Left lung (tissue), 14 donors: ENCODE measurements at regions of chr6 and their contacts with region 1.

Region 1: DNA sequence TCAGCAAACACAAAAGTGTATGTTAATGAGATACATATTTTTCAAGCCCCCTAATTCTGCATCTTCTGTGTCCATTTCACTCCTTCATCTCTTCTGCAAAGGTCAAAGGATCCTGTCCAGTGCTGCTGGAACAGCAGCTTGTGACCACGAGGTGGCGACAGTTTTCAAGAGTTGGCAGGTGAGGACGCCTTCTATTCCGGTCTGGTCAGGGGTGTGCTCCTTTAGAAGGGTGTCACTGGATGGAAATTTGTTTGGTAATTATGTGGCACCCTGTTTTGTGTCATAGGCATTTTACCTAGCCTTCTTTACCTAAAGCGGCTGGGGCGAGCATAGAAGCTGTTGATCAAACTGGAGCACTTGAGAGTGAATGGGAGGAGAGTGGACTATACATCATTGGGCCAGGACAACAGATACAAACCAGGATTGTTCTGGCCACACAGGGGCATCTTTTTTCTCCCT is 32.9 kb upstream of the ERVFRD-1 start:
- DNase-seq: peak; percentile 65 to 85 (median 80)
- ATAC-seq: peak; percentile 96
- H3K4me3 ChIP-seq: no peak overlapping the region
- H3K27ac ChIP-seq: no peak overlapping the region
- H3K4me1 ChIP-seq: peaks cover 8 to 21% of the 10 kb centered on the region in 2 donors
- H3K27me3 ChIP-seq: no peaks in the 10 kb centered on the region
- CTCF ChIP-seq: peak; percentile 85 to 92

Region 2: DNA sequence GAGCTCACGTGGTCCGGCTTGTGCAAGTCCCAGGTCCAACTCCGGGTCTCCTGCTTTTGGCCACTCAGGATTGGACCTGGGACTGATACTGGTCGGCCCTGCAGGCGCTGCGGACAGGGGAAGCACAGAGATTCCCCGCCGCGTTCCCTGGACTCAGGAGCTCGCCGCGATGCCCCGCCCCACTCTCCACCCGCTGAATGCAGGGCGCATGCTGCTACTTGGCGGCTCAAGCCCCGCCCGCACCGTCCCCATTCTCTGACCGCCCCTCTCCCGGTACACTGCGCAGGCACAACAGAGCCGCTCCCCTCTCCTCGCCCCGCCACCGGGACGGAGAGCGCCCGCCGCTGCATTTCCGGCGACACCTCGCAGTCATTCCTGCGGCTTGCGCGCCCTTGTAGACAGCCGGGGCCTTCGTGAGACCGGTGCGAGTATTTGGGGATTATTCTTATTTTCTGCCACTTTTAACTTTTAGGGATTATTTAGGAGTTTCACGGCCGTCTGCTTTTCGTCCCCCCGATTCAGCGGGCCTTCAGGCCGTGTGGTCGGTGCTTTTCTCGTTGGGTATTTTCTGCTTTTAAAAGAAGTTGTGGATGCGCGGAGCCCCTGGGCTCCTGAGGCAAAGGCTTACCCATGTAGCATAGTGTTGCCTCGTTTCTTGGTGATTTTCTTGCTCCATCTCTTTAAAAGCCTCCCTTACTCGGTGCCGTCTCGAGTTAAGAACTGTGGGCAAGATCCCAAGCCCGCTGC is 421.4 kb before region 1 on chr6 and contains the start of gene TMEM14C:
- intact Hi-C with region 1: no loop called
- DNase-seq: peak; percentile 96 to 100 (median 99)
- ATAC-seq: peak; percentile 98
- H3K4me3 ChIP-seq: peak within 1 kb of the TSS; percentile 57 to 65
- H3K27ac ChIP-seq: peak within 1 kb of the TSS; percentile 86 to 87
- H3K4me1 ChIP-seq: peaks cover 10 to 42% of the 10 kb centered on the region in 2 donors
- H3K27me3 ChIP-seq: no peaks in the 10 kb centered on the region
- CTCF ChIP-seq: no peak
- polyA plus RNA-seq, gene TMEM14C: 138 to 154 (median 149) TPM

Region 3: GRCh38 chr6:11496152-11497060 is 352.0 kb after region 1 on chr6:
- intact Hi-C with region 1: loop called in 1 of 2 experiments (anchors 2 kb)
- DNase-seq: peak in 3 of 4 donors; percentile 56 to 89 (median 77)
- ATAC-seq: peak; percentile 96
- H3K4me3 ChIP-seq: no peak overlapping the region
- H3K27ac ChIP-seq: peak overlapping the region in 1 of 2 donors; percentile 59
- H3K4me1 ChIP-seq: peaks cover 0 to 44% of the 10 kb centered on the region in 2 donors
- H3K27me3 ChIP-seq: no peaks in the 10 kb centered on the region
- CTCF ChIP-seq: peak; percentile 89

Region 4: GRCh38 chr6:11575408-11576033 is 431.1 kb after region 1 on chr6:
- intact Hi-C with region 1: loop called in 1 of 2 experiments (anchors 10 kb)
- DNase-seq: peak in 3 of 4 donors; percentile 56 to 80 (median 57)
- ATAC-seq: peak; percentile 100
- H3K4me3 ChIP-seq: peak overlapping the region in 1 of 2 donors; percentile 13
- H3K27ac ChIP-seq: peak overlapping the region in 1 of 2 donors; percentile 40
- H3K4me1 ChIP-seq: peaks cover 0 to 10% of the 10 kb centered on the region in 2 donors
- H3K27me3 ChIP-seq: no peaks in the 10 kb centered on the region
- CTCF ChIP-seq: peak; percentile 89 to 93